Tibial artery (tissue), 4 donors: ENCODE measurements at regions of chr9 and their contacts with region 1.

Region 1: DNA sequence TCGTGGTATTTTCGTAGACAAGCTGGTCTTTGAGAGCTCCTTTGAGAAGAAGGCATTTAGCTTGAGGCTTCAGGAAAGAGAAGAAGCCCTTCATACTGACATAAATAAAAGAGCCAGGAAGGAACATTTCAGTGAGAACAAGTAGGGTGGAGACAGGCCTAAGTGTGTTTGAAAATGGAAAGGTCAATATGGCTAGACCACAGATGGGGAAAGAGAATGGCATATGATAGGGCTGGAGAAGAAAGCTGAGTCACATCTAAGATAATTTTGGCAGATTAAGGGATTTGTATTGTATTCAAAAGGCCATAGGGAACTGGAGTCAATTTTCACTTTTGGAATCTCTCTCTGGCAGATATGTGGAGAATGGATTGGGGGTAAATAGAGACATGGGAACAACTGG is 374.9 kb downstream of the TMEM38B start:
- DNase-seq: no peak
- H3K4me3 ChIP-seq: no peak overlapping the region
- H3K27ac ChIP-seq: no peak overlapping the region
- H3K4me1 ChIP-seq: no peaks in the 10 kb centered on the region
- H3K27me3 ChIP-seq: no peaks in the 10 kb centered on the region
- CTCF ChIP-seq: no peak

Region 2: GRCh38 chr9:106758911-106759310 is 689.7 kb after region 1 on chr9:
- intact Hi-C with region 1: loop called (anchors 2 kb)
- DNase-seq: no peak
- H3K4me3 ChIP-seq: no peak overlapping the region
- H3K27ac ChIP-seq: no peak overlapping the region
- H3K4me1 ChIP-seq: no peaks in the 10 kb centered on the region
- H3K27me3 ChIP-seq: no peaks in the 10 kb centered on the region
- CTCF ChIP-seq: no peak